ENCODE measurements at regions of chr15 and their contacts with region 1.

Region 1: GRCh38 chr15:37764733-37765191 is 169.7 kb upstream of the TMCO5A start:
- DNase-seq: peak; percentile 22
- H3K4me3 Mint-ChIP-seq: no peak overlapping the region
- H3K27ac Mint-ChIP-seq: no peak overlapping the region
- H3K4me1 Mint-ChIP-seq: peaks cover 13% of the 10 kb centered on the region
- H3K27me3 Mint-ChIP-seq: no peaks in the 10 kb centered on the region

Region 2: GRCh38 chr15:37652646-37653417 is 111.9 kb before region 1 on chr15:
- CTCF ChIA-PET with region 1: no interaction called
- POLR2A ChIA-PET with region 1: no interaction called
- intact Hi-C with region 1: no loop called
- DNase-seq: no peak
- H3K4me3 Mint-ChIP-seq: no peak overlapping the region
- H3K27ac Mint-ChIP-seq: no peak overlapping the region
- H3K4me1 Mint-ChIP-seq: no peaks in the 10 kb centered on the region
- H3K27me3 Mint-ChIP-seq: no peaks in the 10 kb centered on the region

Region 3: GRCh38 chr15:37720267-37720666 is 44.5 kb before region 1 on chr15:
- CTCF ChIA-PET with region 1: no interaction called
- POLR2A ChIA-PET with region 1: no interaction called
- intact Hi-C with region 1: no loop called
- DNase-seq: no peak
- H3K4me3 Mint-ChIP-seq: no peak overlapping the region
- H3K27ac Mint-ChIP-seq: no peak overlapping the region
- H3K4me1 Mint-ChIP-seq: no peaks in the 10 kb centered on the region
- H3K27me3 Mint-ChIP-seq: no peaks in the 10 kb centered on the region

Region 4: DNA sequence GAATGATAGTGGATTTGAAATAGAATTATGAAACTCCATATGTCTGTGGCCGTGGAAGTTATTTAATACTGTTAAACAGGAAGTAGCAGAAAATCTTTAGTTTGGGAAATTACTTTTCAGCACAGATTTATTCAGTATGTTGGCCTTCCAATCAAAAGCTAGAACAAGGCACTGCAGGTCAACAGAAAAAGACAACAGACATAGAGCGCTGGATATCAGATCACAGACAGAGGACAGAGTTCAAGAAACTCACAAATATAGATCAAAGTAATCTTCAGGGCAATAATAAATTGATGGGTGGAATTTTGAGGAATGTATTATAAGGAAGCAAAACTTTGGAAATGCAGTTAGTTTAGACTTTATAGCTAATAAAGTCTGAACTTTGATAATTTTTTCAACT is 10.2 kb after region 1 on chr15:
- CTCF ChIA-PET with region 1: interaction called, 12 read pairs
- POLR2A ChIA-PET with region 1: no interaction called
- intact Hi-C with region 1: no loop called
- DNase-seq: no peak
- H3K4me3 Mint-ChIP-seq: no peak overlapping the region
- H3K27ac Mint-ChIP-seq: no peak overlapping the region
- H3K4me1 Mint-ChIP-seq: no peaks in the 10 kb centered on the region
- H3K27me3 Mint-ChIP-seq: peaks cover 3% of the 10 kb centered on the region

Region 5: DNA sequence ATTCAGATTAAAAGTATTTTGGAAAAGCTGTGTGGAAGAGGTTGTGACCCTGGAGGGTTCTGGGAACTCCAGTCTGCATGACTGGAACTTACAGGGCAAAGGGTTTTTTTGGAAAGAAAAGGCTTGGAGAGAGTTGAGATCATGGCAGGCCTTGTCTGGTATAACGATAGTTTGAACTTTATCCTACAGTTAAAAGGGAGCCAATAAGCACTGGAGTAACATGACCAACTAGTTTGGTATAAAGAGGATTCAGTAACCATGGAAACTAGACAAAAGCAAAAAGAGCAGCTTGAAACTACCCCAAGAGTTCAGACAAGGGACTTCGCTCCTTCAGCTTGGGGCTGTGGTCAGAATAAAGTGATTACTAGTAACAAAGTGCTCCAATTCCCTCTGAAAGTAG is 18.5 kb after region 1 on chr15:
- CTCF ChIA-PET with region 1: interaction called, 12 read pairs
- POLR2A ChIA-PET with region 1: no interaction called
- intact Hi-C with region 1: no loop called
- DNase-seq: no peak
- H3K4me3 Mint-ChIP-seq: no peak overlapping the region
- H3K27ac Mint-ChIP-seq: no peak overlapping the region
- H3K4me1 Mint-ChIP-seq: no peaks in the 10 kb centered on the region
- H3K27me3 Mint-ChIP-seq: no peaks in the 10 kb centered on the region

Region 6: DNA sequence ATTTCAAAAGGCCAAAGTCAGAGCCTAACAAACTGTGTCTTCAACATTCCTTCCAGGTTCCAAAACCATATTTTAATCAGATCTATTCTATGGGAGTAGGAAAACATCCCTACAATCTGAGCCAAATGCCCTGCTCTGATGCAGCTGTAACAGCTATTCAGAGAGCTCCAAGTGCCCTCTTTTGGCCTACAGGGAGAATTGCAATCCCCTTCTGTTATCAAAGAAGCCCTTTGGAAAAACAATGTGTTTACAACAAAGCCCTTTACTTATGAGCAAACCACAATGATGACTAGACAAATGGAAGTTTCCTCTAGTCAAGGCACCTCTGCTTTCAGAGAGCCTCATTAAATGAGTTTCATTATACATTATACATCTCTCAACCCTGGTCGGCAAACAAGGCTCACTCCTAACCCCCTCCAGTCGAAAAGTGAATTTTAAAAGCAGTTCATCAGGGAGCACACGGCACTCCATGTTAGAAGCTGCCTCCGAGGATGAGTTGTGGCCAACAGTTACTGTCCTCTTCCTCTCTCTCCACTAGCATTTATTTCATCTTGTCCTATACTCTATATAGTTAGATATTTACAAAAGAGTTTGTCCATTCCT is 127.1 kb after region 1 on chr15:
- CTCF ChIA-PET with region 1: interaction called, 10 read pairs
- POLR2A ChIA-PET with region 1: no interaction called
- intact Hi-C with region 1: no loop called
- DNase-seq: no peak
- H3K4me3 Mint-ChIP-seq: no peak overlapping the region
- H3K27ac Mint-ChIP-seq: no peak overlapping the region
- H3K4me1 Mint-ChIP-seq: no peaks in the 10 kb centered on the region
- H3K27me3 Mint-ChIP-seq: peaks cover 10% of the 10 kb centered on the region

Region 7: GRCh38 chr15:38354315-38354929 is 589.7 kb after region 1 on chr15:
- CTCF ChIA-PET with region 1: interaction called, 13 read pairs
- POLR2A ChIA-PET with region 1: no interaction called
- intact Hi-C with region 1: loop called (anchors 2 kb)
- DNase-seq: peak; percentile 66
- H3K4me3 Mint-ChIP-seq: no peak overlapping the region
- H3K27ac Mint-ChIP-seq: no peak overlapping the region
- H3K4me1 Mint-ChIP-seq: no peaks in the 10 kb centered on the region
- H3K27me3 Mint-ChIP-seq: peaks cover 8% of the 10 kb centered on the region

Measured in activated CD4-positive, alpha-beta memory T cell treated with anti-CD3 and anti-CD28 coated beads for 36 hours (primary cell).